ENCODE measurements at regions of chr17 and their contacts with region 1.

Region 1: DNA sequence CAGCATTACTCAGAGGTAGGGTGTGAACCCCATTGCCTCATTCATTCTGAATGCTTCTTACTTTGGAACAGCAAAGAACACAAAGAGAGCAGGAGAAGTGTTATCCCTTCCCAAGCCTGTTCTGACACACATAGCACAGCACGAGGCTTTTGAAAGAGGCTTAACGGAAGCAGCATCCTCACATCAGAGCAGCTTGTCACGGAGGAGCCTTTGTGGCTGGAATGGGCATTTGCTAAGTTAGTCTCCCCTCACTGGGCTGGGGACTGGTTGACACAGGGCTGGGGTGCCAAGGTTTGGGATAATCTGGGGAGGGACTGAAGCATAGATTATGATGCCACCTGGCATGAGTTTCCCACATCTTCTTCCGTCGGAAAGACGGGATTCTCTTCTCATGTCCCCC is 167.5 kb upstream of the DNAH9 start:
- DNase-seq: no peak

Region 2: GRCh38 chr17:11391134-11391533 is 39.6 kb before region 1 on chr17:
- intact Hi-C with region 1: loop called in 1 of 2 experiments (anchors 1 kb)
- DNase-seq: no peak

Region 3: DNA sequence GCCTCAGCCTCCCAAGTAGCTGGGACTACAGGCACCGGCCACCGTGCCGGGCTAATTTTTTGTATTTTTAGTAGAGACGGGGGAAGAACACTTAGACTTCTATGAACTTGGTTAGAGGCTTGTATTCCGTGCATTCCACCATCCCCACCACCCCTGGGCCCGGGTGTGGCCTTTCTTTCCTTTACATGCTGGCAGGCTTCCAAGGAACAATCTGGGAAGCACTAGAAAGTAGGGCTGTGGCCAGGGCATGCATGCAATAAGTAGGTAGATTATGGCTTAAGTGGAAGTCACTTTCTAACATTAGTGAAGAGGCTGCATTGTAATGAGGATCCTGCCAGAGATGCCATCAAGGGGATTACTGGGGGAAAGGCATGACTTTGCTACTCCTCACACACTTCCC is 18.1 kb before region 1 on chr17:
- intact Hi-C with region 1: loop called in 1 of 2 experiments (anchors 1 kb)
- DNase-seq: no peak